CD4-positive, alpha-beta T cell (primary cell): ENCODE measurements at regions of chr7 and their contacts with region 1.

Region 1: GRCh38 chr7:80134536-80135320 is at the start of gene GNAI1:
- DNase-seq: peak in 6 of 14 experiments; percentile 3 to 39 (median 34)
- ATAC-seq: peak; percentile 45
- H3K4me3 ChIP-seq: peak within 1 kb of the TSS; percentile 56
- H3K4me3 Mint-ChIP-seq: peak within 1 kb of the TSS; percentile 92
- H3K27ac ChIP-seq: no peak within 1 kb of the TSS
- H3K27ac Mint-ChIP-seq: peak within 1 kb of the TSS; percentile 26
- H3K4me1 ChIP-seq: peaks cover 3% of the 10 kb centered on the region
- H3K4me1 Mint-ChIP-seq: peaks cover 29% of the 10 kb centered on the region
- H3K27me3 ChIP-seq: peaks cover 4 to 7% of the 10 kb centered on the region in 2 experiments
- H3K27me3 Mint-ChIP-seq: peaks cover 25% of the 10 kb centered on the region
- CTCF ChIP-seq: no peak
- total RNA-seq, gene GNAI1: 1.2 to 2.8 TPM

Region 2: DNA sequence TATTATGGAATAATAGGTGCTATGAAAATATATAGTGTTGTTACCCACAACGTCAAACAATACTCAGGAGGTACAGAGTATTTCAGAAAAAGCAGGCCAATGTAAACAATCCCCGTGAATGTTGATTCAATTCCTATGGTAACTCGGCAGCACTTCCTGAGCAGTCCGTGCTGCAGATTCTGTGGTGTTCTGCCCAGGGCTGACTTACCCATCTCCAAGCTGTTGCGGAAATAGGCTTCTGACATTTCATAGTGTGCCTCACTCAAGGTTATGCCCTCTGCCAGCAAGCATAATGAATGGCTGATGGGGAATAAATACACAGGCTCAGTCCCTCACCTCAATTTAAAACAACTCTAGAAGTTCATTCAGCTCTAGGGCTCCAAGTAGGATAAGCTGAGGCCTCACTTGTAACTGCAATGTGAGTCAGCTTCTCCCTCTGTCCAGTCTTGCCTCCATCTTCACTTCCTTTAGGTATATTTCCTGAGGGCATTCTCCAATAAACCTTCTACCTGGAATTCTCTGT is 177.5 kb after region 1 on chr7:
- CTCF ChIA-PET with region 1: no interaction called
- POLR2A ChIA-PET with region 1: no interaction called
- intact Hi-C with region 1: loop called in 1 of 2 experiments (anchors 10 kb)
- DNase-seq: peak in 6 of 14 experiments; percentile 3 to 52 (median 30)
- ATAC-seq: peak; percentile 90
- H3K4me3 ChIP-seq: no peak overlapping the region
- H3K4me3 Mint-ChIP-seq: no peak overlapping the region
- H3K27ac ChIP-seq: no peak overlapping the region
- H3K27ac Mint-ChIP-seq: peak overlapping the region; percentile 18
- H3K4me1 ChIP-seq: no peaks in the 10 kb centered on the region
- H3K4me1 Mint-ChIP-seq: peaks cover 37% of the 10 kb centered on the region
- H3K27me3 ChIP-seq: no peaks in the 10 kb centered on the region
- H3K27me3 Mint-ChIP-seq: no peaks in the 10 kb centered on the region
- CTCF ChIP-seq: no peak